Lower leg skin (tissue), 4 donors: ENCODE measurements at regions of chr14 and their contacts with region 1.

Region 1: GRCh38 chr14:48805315-48805714 is 780.9 kb downstream of the RPS29 start:
- DNase-seq: peak in 1 of 2 donors; percentile 58
- H3K4me3 ChIP-seq: no peak overlapping the region
- CTCF ChIP-seq: no peak
- POLR2A ChIP-seq: no peak

Region 2: DNA sequence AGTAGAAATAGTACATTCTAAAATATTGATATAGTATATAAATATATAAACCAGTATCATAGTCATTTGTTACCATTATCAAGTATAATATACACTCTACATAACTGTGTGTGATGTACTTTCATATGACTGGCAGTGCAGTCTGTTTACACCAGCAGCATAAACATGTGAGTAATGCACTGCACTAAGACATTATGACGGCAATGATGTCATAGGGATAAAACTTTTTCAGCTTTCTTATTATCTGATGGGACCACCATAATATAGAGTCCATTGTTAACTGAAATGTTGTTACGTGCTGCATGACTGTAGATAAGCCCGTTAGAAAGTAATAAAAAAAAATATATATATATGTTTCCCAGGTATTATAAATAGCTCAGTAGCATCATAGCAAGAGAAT is 115.3 kb after region 1 on chr14:
- intact Hi-C with region 1: loop called (anchors 5 kb)
- DNase-seq: no peak
- H3K4me3 ChIP-seq: no peak overlapping the region
- CTCF ChIP-seq: no peak
- POLR2A ChIP-seq: no peak

Region 3: GRCh38 chr14:49581209-49582112 is 776.1 kb after region 1 on chr14:
- intact Hi-C with region 1: no loop called
- DNase-seq: no peak
- H3K4me3 ChIP-seq: no peak overlapping the region
- CTCF ChIP-seq: no peak
- POLR2A ChIP-seq: no peak